ENCODE measurements at regions of chr2 and their contacts with region 1.

Region 1: GRCh38 chr2:18149645-18150246 is 271.3 kb downstream of the KCNS3 start:
- DNase-seq: peak; percentile 39
- CTCF ChIP-seq: peak; percentile 68

Region 2: GRCh38 chr2:17518212-17519154 is 631.3 kb before region 1 on chr2 and contains the start of gene RAD51AP2:
- in situ Hi-C with region 1: no loop called
- DNase-seq: peak; percentile 75
- CTCF ChIP-seq: no peak

Region 3: DNA sequence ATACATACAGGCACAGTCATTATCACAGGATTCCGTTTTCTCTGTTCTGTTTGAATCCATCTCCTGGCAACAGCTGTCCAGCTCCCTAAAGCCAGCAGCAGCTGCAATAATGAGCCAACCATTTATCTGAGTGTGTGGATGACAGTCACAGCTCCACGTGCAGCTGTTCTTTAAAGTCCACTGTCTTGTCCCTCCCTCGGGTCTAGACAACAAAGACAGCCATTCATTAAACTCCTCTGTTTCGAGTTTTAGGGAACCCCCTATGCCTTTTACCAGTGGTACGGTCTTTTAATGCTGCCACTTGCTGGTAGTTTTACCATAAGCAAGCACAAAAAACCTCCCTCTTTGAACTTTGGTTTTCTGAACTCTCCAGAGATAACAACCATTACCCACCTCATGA is 349.5 kb before region 1 on chr2:
- in situ Hi-C with region 1: no loop called
- DNase-seq: no peak
- CTCF ChIP-seq: no peak

Region 4: GRCh38 chr2:17851731-17852585 is 297.8 kb before region 1 on chr2:
- in situ Hi-C with region 1: loop called (anchors 25 kb)
- DNase-seq: peak; percentile 75
- CTCF ChIP-seq: peak; percentile 92

Region 5: DNA sequence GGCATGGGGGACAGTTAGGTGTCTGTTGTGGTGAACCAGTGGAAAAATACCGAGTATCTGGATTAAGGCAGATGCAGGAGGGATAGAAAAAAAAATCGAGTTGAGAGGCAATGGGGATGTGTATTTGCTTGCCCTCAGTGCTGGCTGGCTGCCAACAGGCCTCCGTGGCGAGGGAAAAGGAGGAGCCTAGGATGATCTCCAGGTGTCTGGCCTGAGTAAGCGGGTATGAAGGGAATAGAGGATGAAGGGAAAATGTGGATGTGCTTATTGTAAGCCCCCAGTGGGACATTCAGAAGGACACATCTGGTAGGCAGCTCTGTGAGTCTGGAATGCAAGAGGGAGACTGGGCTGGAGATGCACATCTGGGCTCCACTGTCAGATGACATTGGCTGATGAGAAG is 248.5 kb before region 1 on chr2:
- in situ Hi-C with region 1: no loop called
- DNase-seq: no peak
- CTCF ChIP-seq: no peak